ENCODE measurements at regions of chr2 and their contacts with region 1.

Region 1: DNA sequence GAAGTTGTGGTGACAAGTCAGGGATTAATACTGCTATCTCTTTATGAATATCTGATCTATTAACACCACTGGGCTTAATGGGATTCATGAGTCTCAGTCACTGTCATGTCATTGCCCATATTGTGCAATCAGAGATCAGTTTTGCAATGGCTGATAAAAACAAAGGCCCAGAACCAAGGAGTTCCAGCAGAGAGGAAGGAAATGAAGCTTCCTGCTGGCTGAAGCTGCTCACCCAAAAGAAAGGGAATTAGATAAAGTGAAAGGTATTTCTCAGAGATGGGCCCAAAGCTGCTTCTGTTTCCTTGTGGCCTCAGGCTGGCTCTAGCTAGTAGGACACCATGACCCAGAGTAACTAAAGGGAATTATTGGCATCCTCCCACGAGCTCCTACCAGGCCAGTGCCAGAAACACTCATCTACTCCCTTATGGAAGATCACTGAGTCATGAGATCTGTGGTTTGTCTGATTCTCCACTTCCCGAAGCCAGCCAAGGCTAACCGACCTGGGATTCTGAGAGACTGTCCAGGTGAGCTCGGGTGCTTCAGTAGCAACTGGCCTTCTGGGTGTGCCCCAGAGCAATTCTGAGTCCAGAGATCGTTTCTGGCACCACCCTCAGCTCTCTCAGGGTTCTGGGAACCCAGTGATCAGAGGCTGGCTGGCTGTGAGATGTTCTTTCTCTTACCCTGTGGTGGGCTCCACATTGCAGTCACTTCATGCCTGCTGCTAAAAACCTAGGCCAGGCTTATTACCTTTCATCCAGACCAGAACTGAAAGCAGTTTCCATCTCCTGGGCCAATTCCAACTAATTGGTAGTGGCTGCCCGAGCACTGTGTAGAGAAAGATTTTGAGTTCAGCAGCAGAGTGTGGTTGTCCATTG is 129.5 kb upstream of the PELI1 start:
- DNase-seq: peak; percentile 80
- H3K4me3 ChIP-seq: no peak overlapping the region
- H3K27me3 ChIP-seq: no peaks in the 10 kb centered on the region
- CTCF ChIP-seq: no peak

Region 2: GRCh38 chr2:64036034-64036705 is 237.6 kb before region 1 on chr2:
- CTCF ChIA-PET with region 1: no interaction called
- POLR2A ChIA-PET with region 1: no interaction called
- DNase-seq: no peak
- H3K4me3 ChIP-seq: no peak overlapping the region
- H3K27me3 ChIP-seq: no peaks in the 10 kb centered on the region; the same call in 1 of the 2 replicates
- CTCF ChIP-seq: no peak

Region 3: GRCh38 chr2:64177315-64177714 is 96.4 kb before region 1 on chr2:
- CTCF ChIA-PET with region 1: no interaction called
- POLR2A ChIA-PET with region 1: interaction called, 13 read pairs
- DNase-seq: no peak
- H3K4me3 ChIP-seq: no peak overlapping the region
- H3K27me3 ChIP-seq: 0 out of 2 replicates have a peak, but pooled peaks cover 2% of the 10 kb centered on the region
- CTCF ChIP-seq: no peak

Region 4: GRCh38 chr2:64311948-64312621 is 38.3 kb after region 1 on chr2:
- CTCF ChIA-PET with region 1: interaction called, 13 read pairs
- POLR2A ChIA-PET with region 1: no interaction called
- DNase-seq: peak; percentile 62
- H3K4me3 ChIP-seq: no peak overlapping the region
- H3K27me3 ChIP-seq: peaks cover 15% of the 10 kb centered on the region
- CTCF ChIP-seq: peak; percentile 71

Region 5: DNA sequence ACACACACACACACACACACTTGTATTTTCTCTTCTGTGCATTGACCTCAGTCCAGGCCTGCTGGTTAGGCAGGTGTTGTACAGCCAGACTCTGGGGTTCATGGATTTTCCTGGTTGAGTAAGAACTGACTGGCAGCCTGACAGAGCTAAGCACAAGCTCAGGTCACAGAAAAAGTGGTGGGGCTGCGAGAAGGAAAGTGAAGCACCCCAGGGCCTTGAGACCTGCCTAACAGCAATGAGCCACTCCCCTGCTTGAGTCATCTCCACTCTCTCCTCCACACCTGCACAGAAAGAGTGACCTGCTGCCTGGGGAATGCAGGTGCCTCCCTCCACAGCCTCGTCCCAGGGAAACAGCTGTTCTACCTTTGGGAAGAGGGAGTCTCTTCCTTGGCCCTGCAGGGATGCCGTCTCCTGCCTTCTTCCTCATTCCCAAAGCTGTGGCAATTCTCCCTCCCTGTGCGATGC is 88.8 kb after region 1 on chr2:
- CTCF ChIA-PET with region 1: no interaction called
- POLR2A ChIA-PET with region 1: no interaction called
- DNase-seq: no peak
- H3K4me3 ChIP-seq: no peak overlapping the region
- H3K27me3 ChIP-seq: peaks cover 12% of the 10 kb centered on the region
- CTCF ChIP-seq: no peak

Region 6: DNA sequence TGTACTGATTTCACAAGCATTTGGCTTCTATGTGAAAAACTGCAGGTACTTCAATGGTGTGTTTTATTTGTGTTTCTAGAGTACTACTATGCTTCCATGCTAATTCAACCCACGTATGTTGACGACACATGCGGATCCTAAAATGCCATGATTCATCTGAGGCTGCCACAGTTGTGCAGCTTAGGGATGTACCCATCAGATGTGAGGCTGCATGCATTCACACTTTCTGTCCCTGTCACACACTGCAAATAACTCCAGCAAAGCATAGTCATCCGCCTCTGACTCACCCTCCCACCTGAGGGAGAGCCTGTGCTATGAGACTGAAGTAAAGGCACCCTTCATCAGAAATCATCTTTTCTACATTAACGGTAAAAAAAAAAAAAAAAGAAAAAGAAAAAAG is 402.1 kb after region 1 on chr2:
- CTCF ChIA-PET with region 1: no interaction called
- POLR2A ChIA-PET with region 1: no interaction called
- DNase-seq: no peak
- H3K4me3 ChIP-seq: no peak overlapping the region
- H3K27me3 ChIP-seq: no peaks in the 10 kb centered on the region
- CTCF ChIP-seq: no peak

Measured in BJ (cell line).